Psoas muscle (tissue), 8 donors: ENCODE measurements at regions of chr3 and their contacts with region 1.

Region 1: DNA sequence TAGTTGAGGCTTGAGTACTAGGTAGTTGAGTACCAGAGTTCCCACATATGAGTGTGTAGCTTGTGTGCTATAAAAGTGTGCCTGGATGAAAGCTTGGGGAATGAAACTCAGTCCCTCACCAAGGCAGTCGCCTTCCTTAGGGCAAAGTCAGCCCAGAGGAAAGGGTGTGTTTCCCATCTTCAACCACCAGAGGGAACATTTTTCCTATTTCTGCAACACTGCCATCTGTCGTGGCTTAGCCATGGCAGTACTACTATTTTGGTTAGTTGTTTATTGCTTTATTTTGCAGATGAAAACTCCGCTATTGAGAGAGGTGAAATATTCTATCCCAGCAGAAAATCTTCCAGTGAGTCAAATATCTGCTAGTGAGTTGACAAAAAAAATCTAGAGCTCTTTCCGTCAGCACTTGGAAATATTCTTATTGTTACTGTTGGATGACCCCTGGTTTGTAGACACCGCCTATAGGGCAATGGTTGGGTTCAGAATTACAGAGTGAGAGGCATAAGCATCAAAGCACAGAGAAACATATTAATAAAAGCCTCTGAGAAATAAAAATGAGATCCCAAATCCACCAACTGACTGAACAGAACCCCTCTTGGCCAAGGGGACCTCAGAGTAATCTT is 239.9 kb downstream of the CPNE4 start:
- DNase-seq: no peak
- ATAC-seq: peak in 2 of 4 donors; percentile 46 to 63
- H3K4me3 ChIP-seq: no peak overlapping the region
- H3K27ac ChIP-seq: no peak overlapping the region
- H3K4me1 ChIP-seq: no peaks in the 10 kb centered on the region
- H3K27me3 ChIP-seq: no peaks in the 10 kb centered on the region
- CTCF ChIP-seq: peak; percentile 70

Region 2: GRCh38 chr3:132029182-132029902 is 234.5 kb after region 1 on chr3:
- intact Hi-C with region 1: loop called (anchors 2 to 10 kb)
- DNase-seq: peak; percentile 72 to 83
- ATAC-seq: peak; percentile 36 to 80 (median 72)
- H3K4me3 ChIP-seq: no peak overlapping the region
- H3K27ac ChIP-seq: no peak overlapping the region
- H3K4me1 ChIP-seq: no peaks in the 10 kb centered on the region
- H3K27me3 ChIP-seq: peaks cover 3 to 29% (median 6%) of the 10 kb centered on the region in 3 donors
- CTCF ChIP-seq: peak; percentile 71

Region 3: GRCh38 chr3:132034486-132035464 is 239.9 kb after region 1 on chr3 and contains the start of gene CPNE4:
- intact Hi-C with region 1: loop called (anchors 2 to 10 kb)
- DNase-seq: peak; percentile 75 to 80
- ATAC-seq: peak in 3 of 4 donors; percentile 65 to 76 (median 74)
- H3K4me3 ChIP-seq: peak within 1 kb of the TSS; percentile 2
- H3K27ac ChIP-seq: no peak within 1 kb of the TSS
- H3K4me1 ChIP-seq: no peaks in the 10 kb centered on the region
- H3K27me3 ChIP-seq: peaks cover 12 to 64% (median 15%) of the 10 kb centered on the region in 3 donors
- CTCF ChIP-seq: peak; percentile 47
- total RNA-seq, gene CPNE4: not detected